Left colon (tissue), 2 donors: ENCODE measurements at regions of chr15 and their contacts with region 1.

Region 1: GRCh38 chr15:63945007-63945788 is 101.1 kb downstream of the DAPK2 start:
- DNase-seq: peak; percentile 60 to 86
- ATAC-seq: peak; percentile 93

Region 2: DNA sequence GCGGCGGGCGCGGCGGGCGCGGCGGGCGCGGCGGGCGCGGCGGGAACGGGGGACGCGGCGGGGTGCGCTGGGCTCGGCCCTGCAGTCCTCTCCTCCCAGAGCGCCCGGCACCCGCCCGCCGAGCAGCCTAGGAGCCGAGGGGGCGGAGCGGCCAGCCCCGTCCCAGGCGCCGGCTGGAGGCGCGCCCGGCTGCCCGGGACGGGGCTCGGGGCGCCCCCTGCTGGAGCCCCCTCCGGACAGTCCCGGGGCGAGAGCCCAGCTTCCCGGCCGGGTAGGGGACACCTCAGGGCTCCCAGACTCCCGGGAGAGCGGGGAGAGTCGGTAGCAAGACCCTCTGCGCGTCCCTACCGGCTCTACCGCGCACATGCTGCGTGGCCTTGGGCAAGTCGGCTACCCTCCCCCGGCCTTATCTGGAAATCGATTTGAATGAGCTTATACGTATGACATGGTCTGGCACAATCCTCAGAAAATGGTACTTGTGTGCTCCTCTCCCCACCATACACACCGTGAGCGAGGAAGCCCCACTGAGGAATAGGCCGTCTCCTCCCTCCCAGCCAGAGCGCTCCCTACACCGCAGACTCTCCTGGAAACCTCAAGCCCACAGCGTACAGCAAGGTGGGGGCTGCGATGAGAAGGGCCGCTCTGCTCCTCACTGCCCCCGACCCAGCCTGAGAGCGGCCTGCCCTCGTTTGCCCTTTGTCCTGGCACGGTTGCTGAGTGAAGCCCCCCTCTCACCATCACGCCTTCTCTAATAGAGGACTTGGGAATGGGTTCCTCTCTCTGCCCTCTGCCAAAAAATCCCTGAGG is 101.4 kb after region 1 on chr15 and contains the start of gene DAPK2:
- intact Hi-C with region 1: loop called in 1 of 2 experiments (anchors 10 kb)
- DNase-seq: peak; percentile 63 to 81
- ATAC-seq: peak; percentile 83
- total RNA-seq, gene DAPK2: 48.8 to 58.3 TPM

Region 3: DNA sequence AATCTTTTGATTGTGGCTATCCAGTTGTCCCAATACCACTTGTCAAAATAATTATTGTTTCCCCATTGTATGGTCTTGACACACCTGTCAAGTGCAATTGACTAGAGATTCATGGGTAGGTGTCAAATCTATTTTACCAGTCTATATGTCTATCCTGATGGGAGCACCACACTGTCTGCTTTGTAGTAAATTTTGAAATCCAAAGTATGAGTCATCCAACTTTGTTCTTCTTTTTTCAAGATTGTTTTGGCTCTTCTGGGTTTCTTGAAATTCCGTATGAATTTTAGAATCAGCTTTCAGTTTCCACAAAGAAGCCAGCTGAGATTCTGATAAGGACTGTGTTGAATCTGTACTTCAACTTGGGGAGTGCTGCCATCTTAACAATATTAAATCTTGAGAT is 338.8 kb after region 1 on chr15:
- intact Hi-C with region 1: no loop called
- DNase-seq: no peak
- ATAC-seq: no peak